GM12878 (cell line): ENCODE measurements at regions of chr3 and their contacts with region 1.

Region 1: DNA sequence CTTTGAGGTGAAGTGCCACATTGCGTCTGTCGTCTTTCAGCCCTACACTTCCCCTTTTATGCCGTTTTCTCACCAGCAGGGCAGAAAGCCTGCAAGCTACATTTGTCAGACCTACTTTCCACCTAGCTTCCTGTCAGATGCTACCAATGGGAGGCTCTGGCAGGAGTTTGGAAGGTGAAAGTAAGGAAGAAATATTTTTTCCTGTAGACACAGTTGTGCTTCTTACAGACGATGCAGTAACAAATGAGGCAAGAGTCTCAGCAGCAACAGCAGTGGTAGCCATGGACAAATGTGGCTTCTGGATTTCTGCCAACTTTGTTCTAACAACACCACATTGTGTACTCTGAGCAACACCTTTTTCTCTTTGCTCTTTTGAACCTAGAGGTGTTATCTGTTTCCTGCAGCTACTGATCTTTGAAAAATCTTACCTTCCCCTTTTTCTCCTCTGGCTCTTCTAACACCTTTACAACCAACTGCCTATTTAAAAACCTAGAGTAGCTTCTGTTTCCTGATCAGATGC is 70.6 kb upstream of the STT3B start:
- DNase-seq: peak; percentile 64
- ATAC-seq: peak; percentile 97
- H3K4me3 ChIP-seq: peak overlapping the region; percentile 7; the same call in 1 of the 2 replicates
- H3K27ac ChIP-seq: peak overlapping the region; percentile 9
- H3K4me1 ChIP-seq: peaks cover 13% of the 10 kb centered on the region
- H3K27me3 ChIP-seq: no peaks in the 10 kb centered on the region
- CTCF ChIP-seq: peak; percentile 4 to 40 (median 37); a peak in 3 of 6 replicates
- EP300 ChIP-seq: 0 out of 4 replicates have a peak, but pooled peaks have one; percentile 23 to 33
- POLR2A ChIP-seq: no peak
- RAD21 ChIP-seq: peak; percentile 35

Region 2: GRCh38 chr3:31391150-31391549 is 71.0 kb before region 1 on chr3:
- CTCF ChIA-PET with region 1: no interaction called
- POLR2A ChIA-PET with region 1: interaction called, 3 read pairs
- RAD21 ChIA-PET with region 1: interaction called, 3 read pairs
- SMC1A ChIA-PET with region 1: interaction called, 11 read pairs
- in situ Hi-C with region 1: no loop called
- intact Hi-C with region 1: no loop called
- DNase-seq: no peak
- ATAC-seq: peak; percentile 81
- H3K4me3 ChIP-seq: no peak overlapping the region
- H3K27ac ChIP-seq: peak overlapping the region; percentile 35; the same call in 1 of the 2 replicates
- H3K4me1 ChIP-seq: peaks cover 34% of the 10 kb centered on the region
- H3K27me3 ChIP-seq: no peaks in the 10 kb centered on the region
- CTCF ChIP-seq: no peak
- EP300 ChIP-seq: no peak
- POLR2A ChIP-seq: no peak
- RAD21 ChIP-seq: 0 out of 2 replicates have a peak, but pooled peaks have one; percentile 4

Region 3: GRCh38 chr3:31448035-31448881 is 13.9 kb before region 1 on chr3:
- CTCF ChIA-PET with region 1: interaction called, 7 read pairs
- POLR2A ChIA-PET with region 1: no interaction called
- RAD21 ChIA-PET with region 1: interaction called, 3 read pairs
- SMC1A ChIA-PET with region 1: interaction called, 11 read pairs
- in situ Hi-C with region 1: no loop called
- intact Hi-C with region 1: no loop called
- DNase-seq: no peak
- ATAC-seq: peak; percentile 96
- H3K4me3 ChIP-seq: 0 out of 2 replicates have a peak overlapping the region, but pooled peaks have one; percentile 42
- H3K27ac ChIP-seq: peak overlapping the region; percentile 79
- H3K4me1 ChIP-seq: peaks cover 34% of the 10 kb centered on the region
- H3K27me3 ChIP-seq: no peaks in the 10 kb centered on the region
- CTCF ChIP-seq: peak; percentile 43 to 73 (median 67)
- EP300 ChIP-seq: no peak
- POLR2A ChIP-seq: no peak
- RAD21 ChIP-seq: peak; percentile 71

Region 4: DNA sequence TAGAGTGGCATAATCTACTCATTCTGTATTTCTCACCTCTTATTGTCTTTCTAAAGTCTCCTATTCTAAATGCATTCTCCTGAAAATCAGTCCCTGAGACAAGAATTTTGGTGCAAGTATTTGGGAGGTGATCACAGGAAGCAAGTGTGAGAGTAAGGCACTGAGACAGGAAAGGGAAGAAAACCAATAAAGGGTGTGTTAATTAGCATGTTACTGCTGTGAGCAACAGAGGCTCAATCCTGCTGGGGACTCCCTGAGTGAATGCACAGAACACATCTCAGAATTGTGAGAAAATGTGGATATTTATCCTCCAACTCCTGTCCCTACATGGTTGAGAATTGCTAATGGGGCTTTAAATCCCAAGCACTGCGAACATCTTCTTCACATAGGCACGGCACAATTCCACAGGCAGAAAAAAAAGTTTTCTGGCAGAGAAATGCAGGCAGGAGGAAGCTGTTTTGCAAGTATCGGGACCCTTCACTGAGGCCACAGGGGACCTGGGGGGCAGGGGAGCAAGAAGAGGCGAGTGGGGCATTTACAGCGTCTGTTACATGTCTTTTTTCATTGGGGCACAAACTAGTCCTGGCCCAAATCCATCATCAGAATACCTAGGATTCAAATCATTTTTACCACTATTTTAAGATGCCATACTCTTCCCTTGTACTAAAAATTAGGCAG is 43.4 kb after region 1 on chr3:
- CTCF ChIA-PET with region 1: interaction called, 7 read pairs
- POLR2A ChIA-PET with region 1: interaction called, 3 read pairs
- RAD21 ChIA-PET with region 1: interaction called, 25 read pairs
- SMC1A ChIA-PET with region 1: interaction called, 25 read pairs
- in situ Hi-C with region 1: no loop called
- intact Hi-C with region 1: no loop called
- DNase-seq: no peak
- ATAC-seq: no peak
- H3K4me3 ChIP-seq: no peak overlapping the region
- H3K27ac ChIP-seq: no peak overlapping the region
- H3K4me1 ChIP-seq: no peaks in the 10 kb centered on the region
- H3K27me3 ChIP-seq: no peaks in the 10 kb centered on the region; a peak in 1 of 4 replicates
- CTCF ChIP-seq: no peak
- EP300 ChIP-seq: no peak
- POLR2A ChIP-seq: no peak
- RAD21 ChIP-seq: no peak